ENCODE measurements at regions of chr12 and their contacts with region 1.

Region 1: GRCh38 chr12:103503977-103504376 is 8.2 kb upstream of the C12orf42 start:
- DNase-seq: peak; percentile 48
- ATAC-seq: peak; percentile 23
- H3K4me3 Mint-ChIP-seq: no peak overlapping the region
- H3K27ac Mint-ChIP-seq: peak overlapping the region; percentile 95
- H3K4me1 Mint-ChIP-seq: peaks cover 56% of the 10 kb centered on the region
- H3K27me3 Mint-ChIP-seq: no peaks in the 10 kb centered on the region
- CTCF ChIP-seq: no peak

Region 2: DNA sequence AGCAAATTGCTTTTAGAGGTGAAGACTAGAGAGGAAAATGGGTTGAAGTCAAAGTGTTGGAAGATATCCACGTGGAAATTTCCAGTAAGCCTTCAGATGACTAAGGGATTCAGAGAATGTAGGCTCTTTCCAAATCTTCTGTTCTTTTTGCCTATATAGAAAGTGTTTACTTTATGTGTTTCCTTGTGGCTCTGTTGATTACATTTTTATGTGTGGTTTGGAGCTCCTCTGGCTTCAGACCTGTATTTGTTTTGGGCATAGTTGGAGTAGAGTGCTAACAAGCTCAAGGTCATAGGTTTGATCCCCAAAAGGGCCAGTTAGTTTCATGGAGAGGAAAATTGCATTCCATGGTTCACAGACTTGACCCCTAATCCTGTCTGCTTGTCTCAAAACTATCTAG is 1115.5 kb before region 1 on chr12:
- CTCF ChIA-PET with region 1: no interaction called
- POLR2A ChIA-PET with region 1: no interaction called
- intact Hi-C with region 1: no loop called
- DNase-seq: no peak
- ATAC-seq: no peak
- H3K4me3 Mint-ChIP-seq: no peak overlapping the region
- H3K27ac Mint-ChIP-seq: no peak overlapping the region
- H3K4me1 Mint-ChIP-seq: no peaks in the 10 kb centered on the region
- H3K27me3 Mint-ChIP-seq: peaks cover 9% of the 10 kb centered on the region
- CTCF ChIP-seq: no peak

Region 3: DNA sequence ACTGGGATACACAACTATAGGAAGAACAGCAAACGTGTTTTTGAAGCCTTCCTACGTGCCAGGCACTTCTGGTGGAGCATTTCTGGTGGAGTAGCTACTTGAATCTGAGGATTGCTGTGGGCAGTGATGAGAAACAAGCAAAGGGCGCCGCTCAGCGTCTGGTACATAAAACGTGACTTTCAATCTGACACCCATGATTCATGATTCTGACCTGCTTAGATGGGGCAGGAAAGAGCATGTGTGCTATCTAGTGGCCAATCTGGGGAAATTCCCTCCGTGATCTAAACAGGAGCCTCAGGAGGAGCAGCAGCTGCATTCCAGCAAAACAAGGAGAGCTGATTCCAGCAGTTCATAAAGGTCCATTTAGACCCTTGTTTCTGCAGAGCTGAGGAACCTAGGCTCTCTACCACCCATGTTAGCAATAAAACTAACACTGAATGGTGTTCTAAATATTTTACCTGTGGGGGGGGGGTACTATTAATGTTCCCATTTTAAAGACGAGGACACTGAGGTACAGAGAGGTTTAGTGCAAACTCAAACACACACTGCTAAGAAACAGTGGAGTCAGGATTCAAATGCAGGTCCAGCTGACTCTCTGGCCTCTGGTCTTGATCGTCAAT is 624.7 kb before region 1 on chr12:
- CTCF ChIA-PET with region 1: interaction called, 6 read pairs
- POLR2A ChIA-PET with region 1: no interaction called
- intact Hi-C with region 1: loop called (anchors 1 kb)
- DNase-seq: no peak
- ATAC-seq: peak; percentile 60
- H3K4me3 Mint-ChIP-seq: no peak overlapping the region
- H3K27ac Mint-ChIP-seq: no peak overlapping the region
- H3K4me1 Mint-ChIP-seq: peaks cover 3% of the 10 kb centered on the region
- H3K27me3 Mint-ChIP-seq: peaks cover 18% of the 10 kb centered on the region
- CTCF ChIP-seq: no peak

Region 4: GRCh38 chr12:103181366-103182152 is 322.4 kb before region 1 on chr12:
- CTCF ChIA-PET with region 1: no interaction called
- POLR2A ChIA-PET with region 1: no interaction called
- intact Hi-C with region 1: loop called (anchors 2 kb)
- DNase-seq: no peak
- ATAC-seq: peak; percentile 93
- H3K4me3 Mint-ChIP-seq: no peak overlapping the region
- H3K27ac Mint-ChIP-seq: no peak overlapping the region
- H3K4me1 Mint-ChIP-seq: peaks cover 10% of the 10 kb centered on the region
- H3K27me3 Mint-ChIP-seq: no peaks in the 10 kb centered on the region
- CTCF ChIP-seq: no peak

Region 5: GRCh38 chr12:103392722-103393121 is 111.3 kb before region 1 on chr12:
- CTCF ChIA-PET with region 1: no interaction called
- POLR2A ChIA-PET with region 1: no interaction called
- intact Hi-C with region 1: loop called (anchors 2 kb)
- DNase-seq: no peak
- ATAC-seq: peak; percentile 79
- H3K4me3 Mint-ChIP-seq: no peak overlapping the region
- H3K27ac Mint-ChIP-seq: peak overlapping the region; percentile 59
- H3K4me1 Mint-ChIP-seq: peaks cover 20% of the 10 kb centered on the region
- H3K27me3 Mint-ChIP-seq: no peaks in the 10 kb centered on the region
- CTCF ChIP-seq: no peak

Region 6: DNA sequence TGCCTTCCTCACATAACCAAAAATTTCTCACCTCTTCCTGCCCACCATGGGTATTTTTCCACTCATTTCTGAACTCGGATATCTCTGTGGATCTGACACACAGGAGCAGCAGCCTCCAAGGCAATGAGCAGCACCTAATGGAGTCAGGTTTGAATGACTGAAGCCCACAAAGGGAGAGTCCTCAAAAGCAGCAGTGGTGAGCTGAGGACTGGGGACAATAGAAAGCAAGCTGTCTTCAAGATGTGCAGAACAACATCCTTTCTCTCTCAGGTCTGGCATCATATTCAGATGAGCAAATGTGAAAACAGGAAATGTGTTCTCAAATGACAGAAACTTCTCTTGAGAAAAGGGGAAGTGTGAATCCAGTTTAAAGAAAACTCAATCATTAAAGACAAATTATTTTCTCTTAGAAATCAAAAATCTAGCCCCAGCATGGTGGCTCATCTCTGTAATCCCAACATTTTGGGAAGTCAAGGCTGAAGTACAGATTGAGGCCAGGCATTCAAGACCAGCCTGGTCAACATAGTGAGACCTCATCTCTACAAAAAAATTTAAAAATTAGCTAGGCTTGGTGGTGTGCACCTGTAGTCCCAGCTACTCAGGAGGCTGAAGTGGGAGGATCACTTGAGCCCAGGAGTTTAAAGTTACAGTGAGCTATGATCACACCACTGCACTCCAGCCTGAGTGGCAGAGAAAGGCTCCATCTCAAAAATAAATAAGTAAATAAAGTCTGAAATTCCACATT is 62.4 kb before region 1 on chr12:
- CTCF ChIA-PET with region 1: no interaction called
- POLR2A ChIA-PET with region 1: interaction called, 9 read pairs
- intact Hi-C with region 1: loop called (anchors 2 kb)
- DNase-seq: peak; percentile 39
- ATAC-seq: peak; percentile 92
- H3K4me3 Mint-ChIP-seq: peak overlapping the region; percentile 91
- H3K27ac Mint-ChIP-seq: peak overlapping the region; percentile 98
- H3K4me1 Mint-ChIP-seq: peaks cover 46% of the 10 kb centered on the region
- H3K27me3 Mint-ChIP-seq: no peaks in the 10 kb centered on the region
- CTCF ChIP-seq: no peak

Region 7: DNA sequence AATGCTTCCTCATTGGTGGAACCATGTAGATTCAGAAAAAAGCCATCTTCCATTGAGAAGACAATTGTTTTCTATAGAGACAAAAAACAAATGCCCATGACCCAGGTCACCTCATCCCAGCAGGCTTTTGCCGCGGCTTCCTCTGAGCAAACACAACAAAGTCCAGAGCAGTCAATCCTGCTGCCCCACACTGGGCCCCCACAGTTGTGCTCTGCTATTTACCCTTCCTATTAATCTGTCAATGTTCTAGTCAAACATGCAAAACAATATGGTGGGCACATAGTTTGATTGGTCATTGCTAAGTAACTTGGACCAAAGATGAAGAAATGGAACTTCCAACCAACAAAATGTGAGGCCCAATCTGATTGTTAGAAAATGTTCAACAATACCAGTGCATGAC is 28.9 kb before region 1 on chr12:
- CTCF ChIA-PET with region 1: no interaction called
- POLR2A ChIA-PET with region 1: no interaction called
- intact Hi-C with region 1: no loop called
- DNase-seq: no peak
- ATAC-seq: no peak
- H3K4me3 Mint-ChIP-seq: no peak overlapping the region
- H3K27ac Mint-ChIP-seq: no peak overlapping the region
- H3K4me1 Mint-ChIP-seq: peaks cover 14% of the 10 kb centered on the region
- H3K27me3 Mint-ChIP-seq: no peaks in the 10 kb centered on the region
- CTCF ChIP-seq: no peak

Region 8: DNA sequence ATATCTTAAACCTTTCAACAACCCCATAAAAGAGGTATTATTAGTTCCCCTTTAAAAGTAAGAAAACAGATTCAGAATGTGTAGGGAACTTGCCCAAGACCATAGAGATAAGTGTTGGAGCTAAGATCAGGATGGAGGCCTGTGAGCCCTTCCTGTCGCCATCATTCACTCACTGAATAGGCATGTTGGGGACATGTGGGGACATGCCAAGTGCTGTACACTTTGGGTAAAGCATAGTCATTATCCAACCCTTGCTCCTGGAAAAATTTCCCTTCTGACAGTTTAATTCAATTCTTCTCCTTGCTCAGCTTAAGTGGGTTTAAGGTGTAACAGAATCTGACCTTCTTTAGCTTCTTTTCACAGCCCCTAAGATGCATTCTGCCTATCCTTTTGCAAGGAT is 19.8 kb after region 1 on chr12:
- CTCF ChIA-PET with region 1: interaction called, 3 read pairs
- POLR2A ChIA-PET with region 1: interaction called, 14 read pairs
- intact Hi-C with region 1: loop called (anchors 1 kb)
- DNase-seq: no peak
- ATAC-seq: no peak
- H3K4me3 Mint-ChIP-seq: no peak overlapping the region
- H3K27ac Mint-ChIP-seq: no peak overlapping the region
- H3K4me1 Mint-ChIP-seq: peaks cover 15% of the 10 kb centered on the region
- H3K27me3 Mint-ChIP-seq: no peaks in the 10 kb centered on the region
- CTCF ChIP-seq: no peak

Region 9: DNA sequence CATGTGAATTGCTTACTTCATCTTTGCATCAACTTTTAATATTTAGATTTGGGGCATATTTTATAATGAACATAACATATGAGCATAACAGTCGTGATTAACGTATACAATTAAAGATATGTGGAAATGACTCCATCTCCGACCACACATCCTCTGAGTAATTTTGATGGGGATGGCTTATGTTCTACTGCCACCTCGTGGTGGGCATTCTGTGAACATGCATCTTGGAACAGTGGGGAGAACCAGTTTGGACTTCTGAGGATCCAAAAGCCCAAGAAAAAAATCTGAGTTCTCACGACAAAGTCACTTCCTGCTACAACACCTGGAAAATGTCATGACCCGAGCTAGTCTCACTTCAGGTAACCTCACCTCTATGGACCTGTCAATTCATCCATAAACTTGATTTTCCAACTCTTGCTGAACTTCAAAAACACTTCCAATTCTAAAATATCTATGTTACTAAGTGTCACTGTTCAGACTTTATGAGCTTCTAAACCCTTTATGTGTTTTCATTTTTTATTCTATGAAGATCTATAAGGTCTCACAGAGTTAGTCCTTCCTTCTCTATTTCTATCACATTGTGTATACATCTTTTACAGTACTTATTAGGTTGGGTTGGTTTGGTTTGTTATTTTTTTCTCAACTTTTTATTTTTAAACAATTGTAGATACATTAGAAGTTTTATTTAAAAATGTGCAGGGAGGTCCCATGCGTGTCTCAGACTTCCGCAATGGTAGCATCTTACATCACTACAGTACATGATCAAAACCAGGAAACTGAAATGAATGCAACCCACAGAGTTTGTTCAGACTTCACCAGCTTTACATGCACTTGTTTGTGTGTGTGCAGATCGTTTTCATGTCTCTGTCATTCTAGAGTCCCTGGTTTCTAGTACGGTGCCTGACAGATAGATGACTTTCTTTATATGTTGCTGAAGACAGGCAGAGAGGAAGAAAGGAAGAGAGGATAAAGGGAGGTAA is 44.9 kb after region 1 on chr12:
- CTCF ChIA-PET with region 1: interaction called, 26 read pairs
- POLR2A ChIA-PET with region 1: no interaction called
- intact Hi-C with region 1: loop called (anchors 2 kb)
- DNase-seq: peak; percentile 44
- ATAC-seq: peak; percentile 74
- H3K4me3 Mint-ChIP-seq: no peak overlapping the region
- H3K27ac Mint-ChIP-seq: peak overlapping the region; percentile 62
- H3K4me1 Mint-ChIP-seq: peaks cover 13% of the 10 kb centered on the region
- H3K27me3 Mint-ChIP-seq: peaks cover 9% of the 10 kb centered on the region
- CTCF ChIP-seq: peak; percentile 90

Region 10: GRCh38 chr12:103742349-103742932 is 238.5 kb after region 1 on chr12:
- CTCF ChIA-PET with region 1: no interaction called
- POLR2A ChIA-PET with region 1: no interaction called
- intact Hi-C with region 1: no loop called
- DNase-seq: no peak
- ATAC-seq: no peak
- H3K4me3 Mint-ChIP-seq: no peak overlapping the region
- H3K27ac Mint-ChIP-seq: no peak overlapping the region
- H3K4me1 Mint-ChIP-seq: no peaks in the 10 kb centered on the region
- H3K27me3 Mint-ChIP-seq: peaks cover 8% of the 10 kb centered on the region
- CTCF ChIP-seq: no peak